ENCODE measurements at regions of chr1 and their contacts with region 1.

Region 1: GRCh38 chr1:117942293-117942692 is 12.8 kb downstream of the WDR3 start:
- H3K4me3 Mint-ChIP-seq: no peak overlapping the region
- H3K27ac Mint-ChIP-seq: no peak overlapping the region
- H3K4me1 Mint-ChIP-seq: no peaks in the 10 kb centered on the region
- H3K27me3 Mint-ChIP-seq: no peaks in the 10 kb centered on the region

Region 2: DNA sequence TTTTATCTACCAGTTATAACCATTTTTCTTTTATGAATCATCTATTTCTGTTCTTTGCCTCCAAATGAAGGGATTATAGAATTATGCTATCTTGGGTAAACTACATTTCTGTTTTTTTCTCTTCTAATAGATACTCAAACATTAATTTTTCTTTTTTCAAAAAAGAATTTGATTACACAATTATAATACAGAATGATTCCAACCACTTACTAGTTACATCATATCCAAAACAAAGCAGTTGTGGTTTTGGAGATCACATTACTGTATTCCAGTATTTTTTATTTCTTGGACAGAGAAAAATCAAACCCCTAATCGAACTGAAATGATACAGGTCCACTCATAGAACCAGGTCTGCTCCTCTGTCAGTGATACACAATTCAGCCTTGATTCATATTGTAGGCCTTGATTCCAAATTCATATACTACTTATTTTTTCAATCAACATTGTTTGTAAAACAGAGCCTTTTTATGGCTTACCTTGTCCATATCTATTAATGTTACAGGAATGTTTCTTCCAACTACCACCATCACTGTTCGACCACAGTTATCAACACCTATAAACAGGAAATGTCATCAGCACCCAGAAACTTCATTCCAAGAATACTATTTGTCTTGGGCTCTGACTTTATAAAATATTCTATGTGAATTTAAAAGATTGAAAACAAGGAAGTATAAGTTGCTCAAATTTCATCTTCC is 56.0 kb before region 1 on chr1:
- intact Hi-C with region 1: loop called (anchors 10 kb)
- H3K4me3 Mint-ChIP-seq: no peak overlapping the region
- H3K27ac Mint-ChIP-seq: no peak overlapping the region
- H3K4me1 Mint-ChIP-seq: no peaks in the 10 kb centered on the region
- H3K27me3 Mint-ChIP-seq: no peaks in the 10 kb centered on the region

Region 3: GRCh38 chr1:117905020-117905419 is 37.3 kb before region 1 on chr1:
- intact Hi-C with region 1: loop called (anchors 5 kb)
- H3K4me3 Mint-ChIP-seq: no peak overlapping the region
- H3K27ac Mint-ChIP-seq: no peak overlapping the region
- H3K4me1 Mint-ChIP-seq: no peaks in the 10 kb centered on the region
- H3K27me3 Mint-ChIP-seq: no peaks in the 10 kb centered on the region